HepG2 (cell line): ENCODE measurements at regions of chr2 and their contacts with region 1.

Region 1: GRCh38 chr2:182186132-182186735 is 200.6 kb downstream of the PPP1R1C start:
- DNase-seq: peak; percentile 31
- ATAC-seq: peak; percentile 71
- H3K4me3 ChIP-seq: no peak overlapping the region
- H3K27ac ChIP-seq: no peak overlapping the region
- H3K4me1 ChIP-seq: 0 out of 2 replicates have a peak, but pooled peaks cover 4% of the 10 kb centered on the region
- H3K27me3 ChIP-seq: no peaks in the 10 kb centered on the region
- CTCF ChIP-seq: peak; percentile 72
- EP300 ChIP-seq: no peak
- POLR2A ChIP-seq: no peak
- RAD21 ChIP-seq: peak; percentile 48; the same call in 1 of the 2 replicates

Region 2: DNA sequence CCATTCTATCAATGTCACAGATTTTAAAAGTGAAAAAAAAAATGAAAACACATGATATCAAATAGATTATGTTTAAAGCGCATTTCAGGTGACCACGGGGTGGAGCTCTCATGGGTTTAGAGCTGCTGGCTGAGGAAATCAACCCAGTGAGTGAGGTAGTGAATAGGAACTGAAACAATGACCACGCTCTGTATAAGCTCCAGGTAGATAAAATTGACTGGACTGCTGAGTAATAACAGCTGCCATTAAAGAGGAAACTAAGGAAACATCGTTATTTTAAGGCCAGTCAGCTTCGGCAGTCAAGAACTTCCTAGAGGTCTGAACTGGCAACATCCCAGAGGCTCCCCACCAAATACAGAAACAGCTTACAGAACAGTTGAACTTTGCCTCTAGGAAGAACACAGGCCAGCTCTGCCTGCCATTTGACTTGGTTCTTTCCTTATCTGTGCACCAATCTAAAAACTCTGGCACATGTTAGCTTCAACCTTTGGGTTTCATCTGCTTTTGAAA is 54.7 kb after region 1 on chr2:
- CTCF ChIA-PET with region 1: no interaction called
- POLR2A ChIA-PET with region 1: no interaction called
- in situ Hi-C with region 1: no loop called
- intact Hi-C with region 1: loop called (anchors 2 kb)
- DNase-seq: peak; percentile 55
- ATAC-seq: peak; percentile 99
- H3K4me3 ChIP-seq: peak overlapping the region in 2 of 3 experiments; percentile 4 to 6; a peak in 2 of 6 replicates
- H3K27ac ChIP-seq: no peak overlapping the region
- H3K4me1 ChIP-seq: peaks cover 7% of the 10 kb centered on the region
- H3K27me3 ChIP-seq: no peaks in the 10 kb centered on the region
- CTCF ChIP-seq: peak; percentile 70
- EP300 ChIP-seq: no peak
- POLR2A ChIP-seq: no peak
- RAD21 ChIP-seq: peak; percentile 38

Region 3: DNA sequence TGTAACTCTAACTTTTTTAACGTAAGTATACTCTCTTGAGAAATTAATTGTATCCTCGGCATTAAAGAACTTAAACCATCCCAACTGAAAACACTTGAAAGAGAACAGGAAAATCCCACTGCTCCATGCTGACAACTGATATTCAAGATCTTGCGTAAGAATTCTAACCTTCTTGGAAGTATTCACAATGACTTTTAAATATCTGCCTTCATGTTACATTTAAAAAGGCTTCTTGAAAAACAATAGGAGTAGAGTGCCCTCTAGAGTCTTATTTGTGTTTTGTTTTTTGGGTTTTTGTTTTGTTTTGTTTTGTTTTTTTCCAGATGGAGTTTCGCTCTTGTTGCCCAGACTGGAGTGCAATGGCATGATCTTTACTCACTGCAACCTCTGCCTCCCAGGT is 464.5 kb after region 1 on chr2:
- CTCF ChIA-PET with region 1: interaction called, 15 read pairs
- POLR2A ChIA-PET with region 1: no interaction called
- in situ Hi-C with region 1: loop called (anchors 5 kb)
- intact Hi-C with region 1: loop called (anchors 1 kb)
- DNase-seq: peak; percentile 28
- ATAC-seq: no peak
- H3K4me3 ChIP-seq: no peak overlapping the region
- H3K27ac ChIP-seq: no peak overlapping the region
- H3K4me1 ChIP-seq: no peaks in the 10 kb centered on the region
- H3K27me3 ChIP-seq: no peaks in the 10 kb centered on the region; a peak in 1 of 5 replicates
- CTCF ChIP-seq: peak; percentile 54
- EP300 ChIP-seq: no peak
- POLR2A ChIP-seq: no peak
- RAD21 ChIP-seq: peak; percentile 32; the same call in 1 of the 2 replicates

Region 4: GRCh38 chr2:182763311-182763912 is 577.2 kb after region 1 on chr2:
- CTCF ChIA-PET with region 1: no interaction called
- POLR2A ChIA-PET with region 1: no interaction called
- in situ Hi-C with region 1: no loop called
- intact Hi-C with region 1: loop called (anchors 10 kb)
- DNase-seq: peak; percentile 62
- ATAC-seq: peak; percentile 84
- H3K4me3 ChIP-seq: no peak overlapping the region
- H3K27ac ChIP-seq: no peak overlapping the region
- H3K4me1 ChIP-seq: 0 out of 2 replicates have a peak, but pooled peaks cover 7% of the 10 kb centered on the region
- H3K27me3 ChIP-seq: no peaks in the 10 kb centered on the region
- CTCF ChIP-seq: peak; percentile 75
- EP300 ChIP-seq: no peak
- POLR2A ChIP-seq: no peak
- RAD21 ChIP-seq: 0 out of 2 replicates have a peak, but pooled peaks have one; percentile 27

Region 5: DNA sequence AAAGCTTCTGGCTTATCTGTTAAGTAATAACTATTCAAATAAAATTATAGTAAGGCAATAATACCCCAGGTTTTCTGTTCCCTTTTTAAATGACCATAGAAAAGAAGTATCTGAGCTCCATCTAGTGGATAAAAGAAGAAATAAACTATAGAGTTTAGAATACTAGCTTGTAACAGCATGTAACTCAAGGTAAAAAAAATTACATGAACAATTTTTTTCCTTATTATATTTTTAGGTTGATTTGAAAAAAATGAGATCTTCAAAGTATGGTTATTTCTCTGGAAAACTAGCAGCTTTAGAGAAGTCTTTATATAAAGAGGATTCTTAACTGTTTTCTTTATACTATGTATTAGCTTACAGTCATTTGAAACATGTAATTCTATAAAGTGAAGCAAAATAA is 793.9 kb after region 1 on chr2:
- CTCF ChIA-PET with region 1: no interaction called
- POLR2A ChIA-PET with region 1: no interaction called
- in situ Hi-C with region 1: no loop called
- intact Hi-C with region 1: loop called (anchors 10 kb)
- DNase-seq: peak; percentile 36
- ATAC-seq: peak; percentile 79
- H3K4me3 ChIP-seq: no peak overlapping the region
- H3K27ac ChIP-seq: no peak overlapping the region
- H3K4me1 ChIP-seq: no peaks in the 10 kb centered on the region
- H3K27me3 ChIP-seq: no peaks in the 10 kb centered on the region
- CTCF ChIP-seq: peak; percentile 45
- EP300 ChIP-seq: no peak
- POLR2A ChIP-seq: no peak
- RAD21 ChIP-seq: no peak